RWPE1 (cell line): ENCODE measurements at regions of chr20 and their contacts with region 1.

Region 1: DNA sequence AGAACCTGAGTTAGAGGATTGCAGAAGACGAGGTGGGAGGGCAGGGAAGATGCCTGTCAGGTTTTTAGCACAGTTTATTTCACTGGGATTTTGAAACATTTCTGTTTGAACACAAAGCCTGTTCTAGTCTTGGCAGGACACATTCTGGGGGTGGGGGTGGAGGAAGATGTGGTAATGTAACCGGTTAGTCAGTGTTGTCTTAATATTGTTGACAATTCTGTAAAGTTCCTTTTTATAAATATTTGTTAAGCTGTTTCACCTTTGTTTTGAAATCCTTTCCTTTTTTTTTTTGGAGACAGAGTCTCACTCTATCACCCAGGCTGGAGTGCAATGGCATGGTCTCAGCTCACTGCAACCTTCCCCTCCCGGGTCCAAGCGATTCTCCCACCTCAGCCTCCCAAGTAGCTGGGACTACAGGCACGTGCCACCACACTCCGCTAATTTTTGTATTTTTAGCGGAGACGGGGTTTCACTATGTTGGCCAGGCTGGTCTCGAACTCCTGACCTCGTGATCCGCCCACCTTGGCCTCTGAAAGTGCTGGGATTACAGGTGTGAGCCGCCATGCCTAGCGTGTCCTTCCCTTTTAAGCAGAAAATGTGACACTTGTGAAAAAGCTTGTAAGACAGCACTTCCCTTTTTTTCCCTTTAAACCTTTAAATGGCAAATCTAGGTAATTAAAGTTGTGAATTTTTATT is 20.2 kb downstream of the SLC9A8 start:
- DNase-seq: peak; percentile 55
- H3K27ac ChIP-seq: peak overlapping the region; percentile 52
- CTCF ChIP-seq: no peak

Region 2: DNA sequence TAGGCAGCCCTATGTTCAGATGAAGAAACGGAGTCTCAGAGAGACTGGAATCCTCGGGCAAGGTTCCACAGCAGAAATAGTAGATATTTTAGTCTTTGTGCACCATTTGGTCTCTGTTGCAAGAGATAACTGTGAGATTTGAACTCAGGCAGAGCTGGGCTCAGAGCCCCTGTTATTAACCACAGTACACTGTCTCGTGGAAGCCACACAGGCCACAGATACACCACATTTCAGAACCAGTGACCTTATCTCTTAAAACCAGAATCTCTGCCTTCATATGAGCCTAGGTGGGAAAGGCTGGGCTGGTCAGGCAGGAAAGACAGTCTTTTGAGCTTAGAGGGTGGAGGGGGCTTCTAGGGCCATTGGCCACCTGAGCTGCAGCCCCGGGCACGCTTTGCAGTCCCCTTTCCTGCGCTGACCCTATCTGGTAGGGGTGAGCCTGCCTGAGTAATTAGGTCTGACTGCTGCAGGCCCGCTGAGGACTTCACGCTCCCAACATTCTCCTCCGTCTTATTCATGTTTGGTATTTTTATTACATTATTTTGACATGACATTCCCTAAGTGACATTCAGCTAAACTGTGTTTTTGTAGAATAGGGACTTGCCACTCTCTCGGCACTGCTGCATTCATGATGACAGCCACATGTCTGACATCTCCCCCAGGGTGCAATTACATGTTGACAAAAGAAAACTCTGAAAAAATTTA is 421.4 kb before region 1 on chr20:
- CTCF ChIA-PET with region 1: no interaction called
- POLR2A ChIA-PET with region 1: no interaction called
- DNase-seq: no peak
- H3K27ac ChIP-seq: no peak overlapping the region
- CTCF ChIP-seq: no peak

Region 3: DNA sequence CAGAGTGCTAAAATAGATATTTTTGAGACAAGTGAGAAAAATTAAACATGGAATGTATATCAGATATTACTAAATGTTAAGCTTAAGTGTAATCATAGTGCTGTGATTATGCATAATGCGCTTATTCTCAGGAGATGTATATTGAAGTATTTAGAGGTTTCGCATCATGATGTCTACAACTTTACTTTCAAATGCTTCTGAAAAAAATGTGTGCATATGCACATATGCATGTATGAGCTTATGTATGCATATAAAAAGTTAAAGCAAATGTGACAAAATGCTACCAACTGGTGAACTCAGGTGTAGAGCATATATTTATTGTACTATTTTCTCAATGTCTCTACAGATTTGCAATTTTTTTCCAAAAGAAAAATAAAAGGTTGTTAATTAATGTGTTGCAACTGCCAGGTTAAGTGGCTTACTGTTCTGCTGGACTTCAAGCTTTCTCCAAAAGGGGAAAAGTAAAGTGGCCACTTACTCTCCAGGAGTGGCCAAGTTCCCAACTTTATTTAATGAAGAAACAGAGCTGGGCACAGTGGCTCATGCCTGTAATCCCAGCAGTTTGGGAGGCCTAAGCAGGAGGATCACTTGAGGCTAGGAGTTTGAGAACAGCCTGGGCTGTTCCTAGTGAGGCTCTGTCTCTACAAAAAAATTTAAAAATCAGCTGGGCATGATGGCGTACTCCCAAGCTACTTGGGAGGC is 168.0 kb before region 1 on chr20:
- CTCF ChIA-PET with region 1: no interaction called
- POLR2A ChIA-PET with region 1: interaction called, 12 read pairs
- DNase-seq: no peak
- H3K27ac ChIP-seq: no peak overlapping the region
- CTCF ChIP-seq: no peak